Activated CD8-positive, alpha-beta T cell treated with anti-CD3 and anti-CD28 coated beads, Interleukin-2, amount 10 ng/mL, durations not matched to agents 7 days and 5 days (primary cell): ENCODE measurements at regions of chr7 and their contacts with region 1.

Region 1: GRCh38 chr7:150448789-150449147 is 1.7 kb upstream of the GIMAP8 start:
- DNase-seq: peak; percentile 93
- ATAC-seq: peak; percentile 58
- H3K4me3 Mint-ChIP-seq: peak overlapping the region; percentile 97
- H3K27ac Mint-ChIP-seq: peak overlapping the region; percentile 95
- H3K4me1 Mint-ChIP-seq: peaks cover 55% of the 10 kb centered on the region
- H3K27me3 Mint-ChIP-seq: no peaks in the 10 kb centered on the region

Region 2: DNA sequence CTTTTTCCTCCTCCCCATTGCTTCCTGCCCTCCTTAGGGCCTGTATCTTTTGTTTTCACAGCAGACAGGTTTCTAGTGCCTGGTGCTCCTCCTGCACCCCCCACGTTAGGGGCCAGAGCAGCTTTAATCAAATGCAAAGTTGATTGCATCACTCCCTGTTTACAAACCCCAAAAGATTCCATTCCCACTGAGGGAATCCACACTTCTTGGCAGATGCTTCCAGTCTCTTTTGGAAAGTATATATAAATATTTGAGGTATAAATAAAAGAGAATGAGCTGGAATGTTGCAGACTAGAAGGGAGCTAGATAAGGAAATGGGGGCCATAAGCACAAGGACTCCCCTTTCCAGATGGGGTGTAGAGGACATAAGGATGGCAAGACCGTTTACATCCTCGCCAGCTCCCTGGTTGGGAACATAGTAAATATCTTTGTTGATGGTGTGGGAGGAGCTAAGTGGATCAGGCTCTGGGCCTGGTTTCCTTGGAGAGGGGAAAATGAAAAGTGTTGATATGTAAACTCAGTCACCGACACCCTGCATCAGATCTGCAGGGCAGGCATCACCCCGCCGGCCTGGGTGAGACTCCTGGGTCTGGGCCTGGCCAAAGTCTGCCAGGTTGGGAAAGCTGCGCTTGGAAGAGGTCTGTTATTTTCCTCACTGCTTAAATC is 113.5 kb before region 1 on chr7:
- CTCF ChIA-PET with region 1: no interaction called
- POLR2A ChIA-PET with region 1: no interaction called
- DNase-seq: no peak
- ATAC-seq: no peak
- H3K4me3 Mint-ChIP-seq: no peak overlapping the region
- H3K27ac Mint-ChIP-seq: no peak overlapping the region
- H3K4me1 Mint-ChIP-seq: peaks cover 11% of the 10 kb centered on the region
- H3K27me3 Mint-ChIP-seq: peaks cover 6% of the 10 kb centered on the region

Region 3: DNA sequence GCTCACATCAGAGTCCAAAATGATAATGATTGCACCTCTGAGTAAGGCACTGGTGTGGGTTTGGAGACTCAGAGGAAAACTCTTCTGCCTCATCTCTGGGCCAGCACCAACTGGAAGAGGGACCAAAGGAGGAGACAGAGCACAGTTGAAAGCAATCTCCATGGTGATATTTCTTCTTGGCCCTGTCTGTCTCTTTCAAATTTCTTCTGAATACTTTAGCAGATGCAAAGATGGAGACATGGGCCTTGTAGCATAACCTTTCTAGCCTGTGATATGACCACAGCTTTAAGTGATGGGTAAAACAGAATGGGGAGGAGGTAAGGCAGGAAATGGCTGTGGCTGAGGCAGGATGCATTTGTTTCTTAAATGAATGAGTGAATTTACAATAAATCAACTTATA is 53.8 kb after region 1 on chr7:
- CTCF ChIA-PET with region 1: interaction called, 35 read pairs
- POLR2A ChIA-PET with region 1: interaction called, 54 read pairs
- DNase-seq: peak; percentile 77
- ATAC-seq: peak; percentile 91
- H3K4me3 Mint-ChIP-seq: peak overlapping the region; percentile 53
- H3K27ac Mint-ChIP-seq: peak overlapping the region; percentile 95
- H3K4me1 Mint-ChIP-seq: peaks cover 80% of the 10 kb centered on the region
- H3K27me3 Mint-ChIP-seq: no peaks in the 10 kb centered on the region

Region 4: DNA sequence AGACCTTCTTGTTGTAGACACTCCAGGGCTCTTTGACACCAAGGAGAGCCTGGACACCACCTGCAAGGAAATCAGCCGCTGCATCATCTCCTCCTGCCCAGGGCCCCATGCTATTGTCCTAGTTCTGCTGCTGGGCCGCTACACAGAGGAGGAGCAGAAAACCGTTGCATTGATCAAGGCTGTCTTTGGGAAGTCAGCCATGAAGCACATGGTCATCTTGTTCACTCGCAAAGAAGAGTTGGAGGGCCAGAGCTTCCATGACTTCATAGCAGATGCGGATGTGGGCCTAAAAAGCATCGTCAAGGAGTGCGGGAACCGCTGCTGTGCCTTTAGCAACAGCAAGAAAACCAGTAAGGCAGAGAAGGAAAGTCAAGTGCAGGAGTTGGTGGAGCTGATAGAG is 71.4 kb after region 1 on chr7:
- CTCF ChIA-PET with region 1: interaction called, 78 read pairs
- POLR2A ChIA-PET with region 1: interaction called, 316 read pairs
- DNase-seq: peak; percentile 56
- ATAC-seq: peak; percentile 50
- H3K4me3 Mint-ChIP-seq: peak overlapping the region; percentile 97
- H3K27ac Mint-ChIP-seq: peak overlapping the region; percentile 87
- H3K4me1 Mint-ChIP-seq: peaks cover 34% of the 10 kb centered on the region
- H3K27me3 Mint-ChIP-seq: no peaks in the 10 kb centered on the region

Region 5: GRCh38 chr7:150631866-150632864 is 183.4 kb after region 1 on chr7 and contains the start of gene GIMAP6:
- CTCF ChIA-PET with region 1: interaction called, 7 read pairs
- POLR2A ChIA-PET with region 1: interaction called, 15 read pairs
- DNase-seq: peak; percentile 59
- ATAC-seq: peak; percentile 68
- H3K4me3 Mint-ChIP-seq: peak within 1 kb of the TSS; percentile 89
- H3K27ac Mint-ChIP-seq: peak within 1 kb of the TSS; percentile 90
- H3K4me1 Mint-ChIP-seq: peaks cover 60% of the 10 kb centered on the region
- H3K27me3 Mint-ChIP-seq: no peaks in the 10 kb centered on the region
- total RNA-seq, gene GIMAP6: 88.9 to 93.3 TPM

Region 6: GRCh38 chr7:150748376-150748775 is 299.6 kb after region 1 on chr7:
- CTCF ChIA-PET with region 1: interaction called, 12 read pairs
- POLR2A ChIA-PET with region 1: interaction called, 16 read pairs
- DNase-seq: no peak
- ATAC-seq: no peak
- H3K4me3 Mint-ChIP-seq: no peak overlapping the region
- H3K27ac Mint-ChIP-seq: peak overlapping the region; percentile 35
- H3K4me1 Mint-ChIP-seq: peaks cover 86% of the 10 kb centered on the region
- H3K27me3 Mint-ChIP-seq: no peaks in the 10 kb centered on the region